Activated naive CD4-positive, alpha-beta T cell treated with anti-CD3 and anti-CD28 coated beads for 36 hours (primary cell): ENCODE measurements at regions of chr12 and their contacts with region 1.

Region 1: GRCh38 chr12:15563663-15564062 is 225.5 kb downstream of the EPS8 start:
- DNase-seq: peak; percentile 67
- H3K4me3 Mint-ChIP-seq: peak overlapping the region; percentile 58
- H3K27ac Mint-ChIP-seq: peak overlapping the region; percentile 90
- H3K4me1 Mint-ChIP-seq: peaks cover 81% of the 10 kb centered on the region
- H3K27me3 Mint-ChIP-seq: no peaks in the 10 kb centered on the region

Region 2: DNA sequence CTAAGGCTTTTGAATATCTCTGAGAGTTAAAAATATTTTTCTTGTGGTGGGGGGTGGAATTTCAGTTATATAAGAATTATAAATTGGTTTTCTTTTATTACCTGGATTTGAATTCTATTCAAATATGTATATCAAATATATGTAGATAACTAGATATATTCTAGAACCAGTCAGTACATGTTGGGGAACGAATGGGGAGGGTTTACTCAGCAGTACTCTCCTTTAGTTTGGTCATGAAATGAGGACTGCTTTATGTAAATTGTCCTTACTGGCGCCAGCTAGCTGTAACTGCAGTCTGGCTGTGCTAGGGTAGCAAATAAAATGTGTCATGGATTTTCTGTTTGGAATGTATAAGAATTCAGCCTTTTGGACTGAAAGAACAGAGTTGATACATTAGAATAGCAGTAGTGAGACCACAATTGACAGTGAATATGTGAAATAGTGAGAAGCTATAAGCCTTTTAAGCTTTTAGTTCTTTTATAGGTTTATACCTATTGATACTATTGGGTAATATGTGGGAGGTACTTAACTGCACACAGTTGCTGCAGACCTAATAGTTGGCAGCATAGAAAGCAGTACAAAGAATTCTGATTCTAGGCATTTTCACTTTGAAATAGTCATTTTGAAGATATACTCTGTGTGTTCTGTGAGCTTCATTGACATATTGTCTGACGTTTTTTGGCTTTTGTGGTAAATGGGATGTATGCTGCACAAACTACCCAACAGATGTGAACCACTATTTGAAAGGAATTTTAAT is 1169.2 kb before region 1 on chr12:
- CTCF ChIA-PET with region 1: interaction called, 3 read pairs
- intact Hi-C with region 1: loop called (anchors 5 kb)
- DNase-seq: peak; percentile 62
- H3K4me3 Mint-ChIP-seq: peak overlapping the region; percentile 77
- H3K27ac Mint-ChIP-seq: peak overlapping the region; percentile 98
- H3K4me1 Mint-ChIP-seq: peaks cover 82% of the 10 kb centered on the region
- H3K27me3 Mint-ChIP-seq: no peaks in the 10 kb centered on the region

Region 3: GRCh38 chr12:15532364-15532977 is 31.2 kb before region 1 on chr12:
- CTCF ChIA-PET with region 1: interaction called, 19 read pairs
- intact Hi-C with region 1: loop called (anchors 1 kb)
- DNase-seq: peak; percentile 72
- H3K4me3 Mint-ChIP-seq: no peak overlapping the region
- H3K27ac Mint-ChIP-seq: no peak overlapping the region
- H3K4me1 Mint-ChIP-seq: peaks cover 18% of the 10 kb centered on the region
- H3K27me3 Mint-ChIP-seq: no peaks in the 10 kb centered on the region

Region 4: GRCh38 chr12:15546102-15546701 is 17.5 kb before region 1 on chr12:
- CTCF ChIA-PET with region 1: interaction called, 32 read pairs
- intact Hi-C with region 1: loop called (anchors 1 kb)
- DNase-seq: peak; percentile 38
- H3K4me3 Mint-ChIP-seq: no peak overlapping the region
- H3K27ac Mint-ChIP-seq: peak overlapping the region; percentile 79
- H3K4me1 Mint-ChIP-seq: peaks cover 64% of the 10 kb centered on the region
- H3K27me3 Mint-ChIP-seq: no peaks in the 10 kb centered on the region

Region 5: GRCh38 chr12:15700595-15700994 is 136.9 kb after region 1 on chr12:
- CTCF ChIA-PET with region 1: no interaction called
- intact Hi-C with region 1: loop called (anchors 5 kb)
- DNase-seq: peak; percentile 45
- H3K4me3 Mint-ChIP-seq: no peak overlapping the region
- H3K27ac Mint-ChIP-seq: peak overlapping the region; percentile 35
- H3K4me1 Mint-ChIP-seq: peaks cover 27% of the 10 kb centered on the region
- H3K27me3 Mint-ChIP-seq: peaks cover 3% of the 10 kb centered on the region